ENCODE measurements at regions of chr17 and their contacts with region 1.

Region 1: GRCh38 chr17:39927101-39927928 is at the starts of genes LRRC3C and ORMDL3:
- DNase-seq: peak; percentile 93
- H3K4me3 ChIP-seq: peak within 1 kb of the TSS; percentile 91
- H3K27ac ChIP-seq: peak within 1 kb of the TSS; percentile 65
- H3K4me1 ChIP-seq: peaks cover 40% of the 10 kb centered on the region
- CTCF ChIP-seq: no peak
- total RNA-seq, gene LRRC3C: not detected in 2 replicates
- total RNA-seq, gene ORMDL3: 62.2 and 62.6 TPM in 2 replicates

Region 2: DNA sequence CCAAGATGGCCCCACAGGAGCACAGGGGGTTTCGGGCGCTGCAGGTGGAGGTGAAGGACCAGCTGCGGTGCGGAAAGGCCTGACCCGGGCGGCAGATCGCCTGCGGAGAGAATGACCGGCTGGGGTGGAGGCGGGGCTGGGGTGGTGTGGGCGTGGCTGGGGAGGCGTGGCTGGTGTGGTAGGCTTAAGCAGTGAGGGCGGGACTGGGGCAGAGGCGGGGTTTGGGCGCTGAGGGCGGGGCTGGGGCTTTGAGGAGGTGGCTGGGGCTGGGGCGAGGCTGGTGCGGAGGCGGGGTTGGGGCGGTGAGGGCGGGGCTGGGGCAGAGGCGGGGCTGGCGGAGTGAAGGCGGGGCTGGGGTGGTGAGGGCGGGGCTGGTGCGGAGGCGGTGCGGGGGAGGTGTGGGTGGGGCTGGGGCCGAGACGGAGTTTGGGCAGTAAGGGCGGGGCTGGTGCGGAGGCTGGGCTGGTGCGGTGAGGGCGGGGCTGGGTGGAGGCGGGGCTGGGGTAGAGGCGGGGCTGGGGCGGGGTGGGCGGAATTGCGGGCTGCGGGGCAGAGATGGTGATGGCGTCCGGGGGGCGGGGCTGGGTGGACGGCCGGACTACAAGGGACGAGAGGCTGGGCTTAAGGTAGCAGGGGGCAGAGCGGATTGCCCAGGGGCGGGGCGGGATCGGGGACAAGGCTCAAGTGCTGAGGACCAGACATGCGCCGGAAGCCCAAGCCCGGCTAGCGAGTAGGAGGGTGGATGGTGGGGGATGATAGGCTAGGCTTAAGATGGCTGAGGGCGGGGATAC is 25.6 kb after region 1 on chr17:
- CTCF ChIA-PET with region 1: interaction called, 3 read pairs
- POLR2A ChIA-PET with region 1: no interaction called
- intact Hi-C with region 1: loop called (anchors 2 kb)
- DNase-seq: peak; percentile 92
- H3K4me3 ChIP-seq: peak overlapping the region; percentile 66
- H3K27ac ChIP-seq: peak overlapping the region; percentile 9
- H3K4me1 ChIP-seq: peaks cover 25% of the 10 kb centered on the region
- CTCF ChIP-seq: no peak

Measured in OCI-LY7 (cell line).